Transverse colon (tissue), 4 donors: ENCODE measurements at regions of chr4 and their contacts with region 1.

Region 1: DNA sequence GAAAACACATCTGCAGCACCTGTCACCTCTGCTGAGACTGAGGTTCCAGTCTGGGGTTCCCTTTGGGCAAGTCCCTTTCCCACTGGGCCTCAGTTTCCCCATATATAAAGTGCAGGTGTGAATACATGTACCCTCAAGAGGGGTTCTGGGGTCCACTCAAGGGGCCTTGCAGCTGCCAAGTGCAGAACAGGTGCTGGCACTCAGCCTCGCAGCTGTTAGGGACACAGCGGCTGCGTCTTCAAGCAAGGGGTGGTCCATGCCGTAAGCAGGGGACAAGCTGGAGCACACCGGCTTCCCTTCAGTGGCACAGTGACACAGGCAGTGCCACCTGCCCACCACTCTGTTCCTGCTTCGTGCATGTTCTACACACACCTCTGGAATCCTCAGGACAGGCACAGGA is 86.9 kb upstream of the PSAPL1 start:
- DNase-seq: no peak
- H3K4me3 ChIP-seq: no peak overlapping the region
- H3K27ac ChIP-seq: no peak overlapping the region
- H3K4me1 ChIP-seq: no peaks in the 10 kb centered on the region
- H3K27me3 ChIP-seq: no peaks in the 10 kb centered on the region
- CTCF ChIP-seq: no peak
- EP300 ChIP-seq: no peak
- POLR2A ChIP-seq: no peak

Region 2: GRCh38 chr4:7423801-7424552 is 97.7 kb before region 1 on chr4:
- in situ Hi-C with region 1: no loop called
- intact Hi-C with region 1: no loop called
- DNase-seq: no peak
- H3K4me3 ChIP-seq: no peak overlapping the region
- H3K27ac ChIP-seq: no peak overlapping the region
- H3K4me1 ChIP-seq: no peaks in the 10 kb centered on the region
- H3K27me3 ChIP-seq: no peaks in the 10 kb centered on the region
- CTCF ChIP-seq: no peak
- EP300 ChIP-seq: no peak
- POLR2A ChIP-seq: no peak

Region 3: DNA sequence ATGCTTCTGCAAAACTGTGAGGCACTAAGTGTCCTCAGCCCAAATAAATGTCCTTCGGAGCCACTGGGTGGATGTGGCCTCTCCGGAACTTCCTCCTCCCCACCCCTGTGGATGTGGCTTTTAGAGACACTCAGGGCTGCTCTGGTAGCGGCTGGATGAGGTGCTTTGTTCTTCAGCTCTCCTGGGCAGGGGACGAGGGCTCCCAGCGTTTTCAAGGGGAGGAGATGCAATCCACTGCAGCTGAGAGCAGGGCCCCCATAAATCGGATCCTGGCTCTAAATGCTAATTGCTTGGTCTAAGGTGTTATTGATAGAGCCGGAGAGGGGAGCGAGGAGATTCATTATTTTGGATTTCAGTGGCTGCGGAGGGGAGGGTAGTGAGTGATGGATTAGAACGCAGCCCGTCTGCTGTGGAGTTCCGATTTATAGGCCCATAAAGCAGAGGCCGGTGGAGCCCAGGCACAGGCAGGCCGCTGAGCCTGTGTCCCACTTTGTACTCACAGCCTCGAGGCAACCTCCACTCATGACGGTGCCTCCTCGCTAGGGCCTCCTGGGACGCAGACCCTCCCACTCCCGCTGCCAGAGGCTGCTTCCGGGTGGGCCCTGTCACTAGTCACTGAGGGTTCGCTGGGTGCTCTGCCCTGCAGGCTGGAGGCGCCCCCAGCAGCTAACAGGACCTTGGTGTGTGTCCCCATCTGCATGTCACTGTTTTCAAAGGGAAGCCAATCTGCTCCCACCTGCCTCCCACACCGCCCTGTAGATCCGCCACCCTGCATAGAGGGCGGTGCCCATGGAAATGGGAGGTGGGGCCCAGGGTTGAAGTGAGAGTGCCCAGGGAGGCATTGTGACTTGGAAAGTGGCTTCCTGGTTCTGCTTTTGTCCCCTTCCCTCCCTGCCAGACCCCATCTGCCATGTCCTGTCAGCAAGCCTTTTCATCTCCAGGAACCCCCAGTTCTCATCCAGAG is 48.4 kb after region 1 on chr4:
- in situ Hi-C with region 1: no loop called
- intact Hi-C with region 1: loop called (anchors 1 kb)
- DNase-seq: no peak
- H3K4me3 ChIP-seq: no peak overlapping the region
- H3K27ac ChIP-seq: no peak overlapping the region
- H3K4me1 ChIP-seq: no peaks in the 10 kb centered on the region
- H3K27me3 ChIP-seq: no peaks in the 10 kb centered on the region
- CTCF ChIP-seq: no peak
- EP300 ChIP-seq: no peak
- POLR2A ChIP-seq: no peak

Region 4: DNA sequence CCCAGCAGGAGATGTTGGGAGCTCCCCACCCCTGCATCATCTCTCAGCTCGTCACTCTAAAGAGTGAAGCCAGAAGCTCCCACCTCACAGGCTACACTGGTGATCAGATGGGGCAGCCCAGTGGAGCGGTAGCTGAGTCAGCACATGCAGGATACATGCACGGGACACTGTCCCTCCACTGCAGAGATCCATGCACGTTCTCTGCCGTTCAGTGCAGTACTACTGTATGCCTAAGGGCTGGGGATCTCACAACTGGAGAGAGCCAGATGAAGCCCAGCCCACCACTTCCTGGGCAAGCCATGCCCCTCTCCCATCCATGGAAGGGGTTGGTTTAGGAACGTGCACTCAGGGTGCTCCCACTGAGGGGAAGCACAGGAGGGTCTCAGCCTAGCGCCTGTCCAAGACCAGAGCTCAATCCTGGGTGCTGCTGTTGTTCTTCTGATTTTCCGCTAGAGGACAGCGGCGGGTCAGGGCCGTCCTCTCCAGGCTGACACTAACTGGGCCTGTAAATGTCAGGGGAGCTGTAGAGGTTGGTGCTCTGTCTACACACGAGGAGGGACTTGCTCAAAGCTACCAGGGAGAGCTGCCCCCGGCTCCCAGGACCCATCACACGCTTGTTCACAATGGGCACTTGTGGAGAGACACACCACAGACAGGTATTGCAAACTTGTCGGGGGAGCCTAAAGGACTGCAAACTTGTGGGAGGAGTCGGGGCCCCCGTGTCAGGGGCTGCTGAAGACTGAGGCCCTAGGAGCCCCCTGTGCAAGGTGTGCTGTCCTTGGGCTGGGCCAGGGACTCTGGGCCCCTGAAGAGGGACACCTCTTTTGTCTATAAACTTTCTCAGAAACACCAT is 655.1 kb after region 1 on chr4:
- in situ Hi-C with region 1: no loop called
- intact Hi-C with region 1: no loop called
- DNase-seq: peak; percentile 54
- H3K4me3 ChIP-seq: no peak overlapping the region
- H3K27ac ChIP-seq: no peak overlapping the region
- H3K4me1 ChIP-seq: peaks cover 0 to 9% (median 4%) of the 10 kb centered on the region in 4 donors
- H3K27me3 ChIP-seq: no peaks in the 10 kb centered on the region
- CTCF ChIP-seq: peak; percentile 71 to 88 (median 80)
- EP300 ChIP-seq: no peak
- POLR2A ChIP-seq: no peak